Dorsolateral prefrontal cortex (tissue), 120 donors: ENCODE measurements at regions of chr14 and their contacts with region 1.

Region 1: GRCh38 chr14:69956970-69957369 is 77.8 kb downstream of the SMOC1 start:
- DNase-seq: peak in 2 of 10 donors; percentile 42 to 62
- H3K4me3 ChIP-seq: peak overlapping the region in 2 of 59 donors; percentile 18 to 36
- H3K27ac ChIP-seq: peak overlapping the region in 10 of 59 donors; percentile 3 to 60 (median 23)
- H3K27me3 ChIP-seq: peaks cover 0 to 7% (median 0%) of the 10 kb centered on the region in 45 donors
- CTCF ChIP-seq: no peak

Region 2: DNA sequence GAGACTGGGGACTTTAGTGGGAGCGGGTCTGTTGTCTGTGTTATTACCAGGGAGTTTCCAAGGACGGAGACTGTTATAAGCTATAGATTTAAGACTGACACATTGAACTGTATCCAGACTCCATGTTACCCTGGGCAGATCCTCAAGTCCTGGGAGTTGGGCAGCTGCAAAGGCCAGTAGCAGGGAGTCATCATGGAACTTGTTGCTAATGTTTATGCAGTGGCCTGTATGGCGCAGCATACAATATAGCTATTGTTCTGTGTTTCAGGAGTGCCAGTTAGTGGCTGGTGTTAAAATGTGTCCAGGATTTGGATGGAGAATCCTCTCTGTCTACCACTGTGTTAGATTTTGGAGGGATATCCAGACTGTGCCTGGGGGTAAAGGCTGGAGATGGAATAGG is 46.1 kb before region 1 on chr14:
- intact Hi-C with region 1: loop called in 1 of 2 experiments (anchors 5 kb)
- DNase-seq: peak in 2 of 10 donors; percentile 32 to 60
- H3K4me3 ChIP-seq: no peak overlapping the region
- H3K27ac ChIP-seq: peak overlapping the region; percentile 13 to 98 (median 86)
- H3K27me3 ChIP-seq: no peaks in the 10 kb centered on the region
- CTCF ChIP-seq: peak in 1 of 56 donors; percentile 10

Region 3: GRCh38 chr14:69985456-69985855 is 28.5 kb after region 1 on chr14:
- intact Hi-C with region 1: no loop called
- DNase-seq: no peak
- H3K4me3 ChIP-seq: no peak overlapping the region
- H3K27ac ChIP-seq: peak overlapping the region in 1 of 59 donors; percentile 20
- H3K27me3 ChIP-seq: peaks cover 0 to 4% (median 0%) of the 10 kb centered on the region in 45 donors
- CTCF ChIP-seq: no peak